Endothelial cell of umbilical vein (primary cell): ENCODE measurements at regions of chr7 and their contacts with region 1.

Region 1: DNA sequence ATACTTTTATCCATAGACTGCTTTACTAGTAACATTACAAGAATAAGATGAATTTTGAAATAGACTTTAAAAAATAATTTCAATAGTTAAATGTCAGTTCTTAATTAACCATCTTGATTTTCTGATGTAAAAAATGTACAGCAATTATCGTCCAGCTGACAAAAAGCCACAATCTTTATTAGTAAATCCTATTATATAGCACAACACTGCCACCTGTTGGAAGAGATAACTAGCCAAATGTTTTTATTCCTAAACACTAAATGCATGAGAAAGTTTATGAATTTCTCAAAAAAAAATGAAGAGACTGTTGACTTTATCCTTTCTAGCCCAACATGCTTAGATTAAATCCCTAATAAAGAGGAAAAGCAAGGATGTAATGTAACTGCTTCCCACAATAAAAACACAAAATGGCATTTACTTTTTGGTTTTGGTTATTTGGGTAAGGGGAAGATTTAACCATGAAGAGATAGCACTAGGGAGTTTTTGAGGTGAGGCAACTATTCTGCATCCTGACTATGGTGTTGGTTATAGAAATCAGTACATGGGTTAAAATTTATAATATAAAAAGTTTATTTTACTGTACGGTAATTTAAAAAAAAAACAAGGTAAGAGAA is 8.0 kb downstream of the COA1 start:
- DNase-seq: peak; percentile 65
- H3K4me3 ChIP-seq: no peak overlapping the region
- H3K27ac ChIP-seq: no peak overlapping the region
- H3K4me1 ChIP-seq: no peaks in the 10 kb centered on the region
- H3K27me3 ChIP-seq: no peaks in the 10 kb centered on the region
- CTCF ChIP-seq: peak; percentile 29 to 49
- POLR2A ChIP-seq: no peak

Region 2: GRCh38 chr7:43175570-43176200 is 545.6 kb before region 1 on chr7:
- CTCF ChIA-PET with region 1: interaction called, 6 read pairs
- POLR2A ChIA-PET with region 1: no interaction called
- dilution Hi-C with region 1: no loop called
- intact Hi-C with region 1: loop called (anchors 5 kb)
- DNase-seq: no peak
- H3K4me3 ChIP-seq: no peak overlapping the region
- H3K27ac ChIP-seq: no peak overlapping the region
- H3K4me1 ChIP-seq: no peaks in the 10 kb centered on the region
- H3K27me3 ChIP-seq: peaks cover 2 to 10% of the 10 kb centered on the region in 2 experiments
- CTCF ChIP-seq: no peak
- POLR2A ChIP-seq: no peak

Region 3: DNA sequence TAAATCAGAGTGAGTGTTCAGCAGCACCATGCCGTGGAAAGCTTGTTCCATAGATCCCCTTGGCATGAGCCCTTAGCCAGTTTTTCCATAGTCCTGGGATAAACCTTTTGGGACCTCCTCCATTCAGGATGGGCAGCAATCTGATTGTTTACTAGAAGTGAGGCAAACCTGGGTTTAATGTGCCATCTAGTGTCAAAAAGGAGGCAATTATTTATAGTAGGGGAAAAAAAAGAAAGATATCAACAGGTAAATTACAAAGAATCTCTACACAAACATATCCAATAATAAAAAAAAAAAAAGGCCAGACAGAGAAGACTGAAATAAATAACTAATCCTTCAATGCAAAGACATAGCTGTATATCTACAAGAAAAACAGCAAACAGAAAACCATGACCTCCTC is 367.4 kb before region 1 on chr7:
- CTCF ChIA-PET with region 1: no interaction called
- POLR2A ChIA-PET with region 1: no interaction called
- dilution Hi-C with region 1: no loop called
- intact Hi-C with region 1: no loop called
- DNase-seq: no peak
- H3K4me3 ChIP-seq: no peak overlapping the region
- H3K27ac ChIP-seq: no peak overlapping the region
- H3K4me1 ChIP-seq: no peaks in the 10 kb centered on the region
- H3K27me3 ChIP-seq: no peaks in the 10 kb centered on the region
- CTCF ChIP-seq: no peak
- POLR2A ChIP-seq: no peak

Region 4: GRCh38 chr7:43439631-43440401 is 281.5 kb before region 1 on chr7:
- CTCF ChIA-PET with region 1: interaction called, 13 read pairs
- POLR2A ChIA-PET with region 1: no interaction called
- dilution Hi-C with region 1: no loop called
- intact Hi-C with region 1: loop called (anchors 1 kb)
- DNase-seq: peak; percentile 37
- H3K4me3 ChIP-seq: no peak overlapping the region
- H3K27ac ChIP-seq: no peak overlapping the region
- H3K4me1 ChIP-seq: no peaks in the 10 kb centered on the region
- H3K27me3 ChIP-seq: peaks cover 0 to 2% of the 10 kb centered on the region in 2 experiments
- CTCF ChIP-seq: peak; percentile 77 to 95
- POLR2A ChIP-seq: no peak

Region 5: DNA sequence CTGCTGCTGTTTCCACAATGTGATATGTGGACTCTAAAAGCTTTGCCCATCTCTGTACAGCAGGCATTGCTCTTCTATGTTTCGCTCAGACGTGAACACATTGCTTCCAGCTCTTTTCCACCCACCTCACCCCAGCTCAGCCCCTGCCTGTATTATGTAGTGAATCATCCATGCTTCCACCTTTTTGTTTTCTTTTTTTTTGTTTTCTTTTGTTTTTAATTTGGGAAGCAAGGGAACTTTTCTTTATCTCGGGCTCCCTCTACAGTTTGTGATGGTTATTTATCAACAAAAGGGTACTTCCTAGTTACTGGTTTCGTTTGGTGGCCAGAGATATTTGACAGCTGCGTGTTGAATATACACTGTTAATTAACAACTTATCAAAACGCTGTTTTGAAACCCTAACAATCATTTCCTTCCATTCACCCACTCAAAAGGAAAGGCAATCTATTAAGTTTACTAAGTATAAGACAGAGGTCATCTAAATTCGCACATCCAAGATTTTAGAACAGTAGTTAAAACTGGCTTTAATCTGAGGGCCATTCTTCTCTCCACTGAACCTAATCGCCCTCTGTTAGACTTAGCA is 266.3 kb before region 1 on chr7:
- CTCF ChIA-PET with region 1: interaction called, 21 read pairs
- POLR2A ChIA-PET with region 1: no interaction called
- dilution Hi-C with region 1: no loop called
- intact Hi-C with region 1: loop called (anchors 5 kb)
- DNase-seq: peak; percentile 68
- H3K4me3 ChIP-seq: peak overlapping the region in 1 of 3 experiments; percentile 39
- H3K27ac ChIP-seq: no peak overlapping the region
- H3K4me1 ChIP-seq: peaks cover 3% of the 10 kb centered on the region
- H3K27me3 ChIP-seq: peaks cover 9 to 29% of the 10 kb centered on the region in 2 experiments
- CTCF ChIP-seq: peak; percentile 30 to 50
- POLR2A ChIP-seq: no peak

Region 6: GRCh38 chr7:43501870-43502269 is 219.4 kb before region 1 on chr7:
- CTCF ChIA-PET with region 1: no interaction called
- POLR2A ChIA-PET with region 1: no interaction called
- dilution Hi-C with region 1: no loop called
- intact Hi-C with region 1: no loop called
- DNase-seq: no peak
- H3K4me3 ChIP-seq: no peak overlapping the region
- H3K27ac ChIP-seq: no peak overlapping the region
- H3K4me1 ChIP-seq: no peaks in the 10 kb centered on the region
- H3K27me3 ChIP-seq: peaks cover 0 to 4% of the 10 kb centered on the region in 2 experiments
- CTCF ChIP-seq: no peak
- POLR2A ChIP-seq: no peak

Region 7: DNA sequence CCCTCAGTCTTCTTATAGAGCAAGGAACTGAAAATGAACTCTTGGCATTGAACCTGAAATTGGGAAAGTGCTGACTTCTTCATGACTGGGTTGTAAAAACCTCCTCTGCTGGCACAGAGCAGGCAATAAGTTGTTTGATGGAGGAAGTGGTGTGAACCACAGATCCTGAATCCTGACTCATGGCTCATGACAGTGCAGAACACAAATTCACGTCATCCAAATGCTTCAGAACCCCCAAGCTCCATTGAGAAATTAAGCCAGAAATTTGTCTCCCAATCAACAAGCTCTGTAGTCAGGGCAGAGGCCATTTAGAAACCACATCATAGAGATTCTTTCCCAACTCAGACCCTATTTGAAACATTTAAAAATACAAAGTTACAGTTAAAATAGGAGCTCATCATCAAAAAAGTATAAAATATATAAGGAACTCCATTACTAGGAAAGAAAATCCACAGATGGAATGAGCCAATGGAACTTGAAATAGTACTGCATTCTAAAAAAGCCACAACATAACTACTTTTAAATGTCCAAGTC is 148.7 kb before region 1 on chr7:
- CTCF ChIA-PET with region 1: interaction called, 12 read pairs
- POLR2A ChIA-PET with region 1: no interaction called
- dilution Hi-C with region 1: loop called (anchors 25 kb)
- intact Hi-C with region 1: no loop called
- DNase-seq: peak; percentile 80
- H3K4me3 ChIP-seq: no peak overlapping the region
- H3K27ac ChIP-seq: peak overlapping the region; percentile 79
- H3K4me1 ChIP-seq: peaks cover 7% of the 10 kb centered on the region
- H3K27me3 ChIP-seq: no peaks in the 10 kb centered on the region
- CTCF ChIP-seq: no peak
- POLR2A ChIP-seq: peak; percentile 13

Region 8: GRCh38 chr7:43784030-43785001 is 63.0 kb after region 1 on chr7:
- CTCF ChIA-PET with region 1: no interaction called
- POLR2A ChIA-PET with region 1: no interaction called
- dilution Hi-C with region 1: no loop called
- intact Hi-C with region 1: no loop called
- DNase-seq: no peak
- H3K4me3 ChIP-seq: no peak overlapping the region
- H3K27ac ChIP-seq: no peak overlapping the region
- H3K4me1 ChIP-seq: no peaks in the 10 kb centered on the region
- H3K27me3 ChIP-seq: no peaks in the 10 kb centered on the region
- CTCF ChIP-seq: no peak
- POLR2A ChIP-seq: no peak